ENCODE measurements at regions of chr15 and their contacts with region 1.

Region 1: GRCh38 chr15:69729161-69729748 is 276.6 kb downstream of the RPLP1 start:
- H3K4me3 Mint-ChIP-seq: no peak overlapping the region
- H3K27ac Mint-ChIP-seq: no peak overlapping the region
- H3K4me1 Mint-ChIP-seq: peaks cover 49% of the 10 kb centered on the region
- H3K27me3 Mint-ChIP-seq: peaks cover 3% of the 10 kb centered on the region

Region 2: GRCh38 chr15:69576035-69576526 is 153.2 kb before region 1 on chr15:
- intact Hi-C with region 1: loop called (anchors 5 kb)
- H3K4me3 Mint-ChIP-seq: no peak overlapping the region
- H3K27ac Mint-ChIP-seq: peak overlapping the region; percentile 63
- H3K4me1 Mint-ChIP-seq: peaks cover 52% of the 10 kb centered on the region
- H3K27me3 Mint-ChIP-seq: peaks cover 32% of the 10 kb centered on the region

Region 3: DNA sequence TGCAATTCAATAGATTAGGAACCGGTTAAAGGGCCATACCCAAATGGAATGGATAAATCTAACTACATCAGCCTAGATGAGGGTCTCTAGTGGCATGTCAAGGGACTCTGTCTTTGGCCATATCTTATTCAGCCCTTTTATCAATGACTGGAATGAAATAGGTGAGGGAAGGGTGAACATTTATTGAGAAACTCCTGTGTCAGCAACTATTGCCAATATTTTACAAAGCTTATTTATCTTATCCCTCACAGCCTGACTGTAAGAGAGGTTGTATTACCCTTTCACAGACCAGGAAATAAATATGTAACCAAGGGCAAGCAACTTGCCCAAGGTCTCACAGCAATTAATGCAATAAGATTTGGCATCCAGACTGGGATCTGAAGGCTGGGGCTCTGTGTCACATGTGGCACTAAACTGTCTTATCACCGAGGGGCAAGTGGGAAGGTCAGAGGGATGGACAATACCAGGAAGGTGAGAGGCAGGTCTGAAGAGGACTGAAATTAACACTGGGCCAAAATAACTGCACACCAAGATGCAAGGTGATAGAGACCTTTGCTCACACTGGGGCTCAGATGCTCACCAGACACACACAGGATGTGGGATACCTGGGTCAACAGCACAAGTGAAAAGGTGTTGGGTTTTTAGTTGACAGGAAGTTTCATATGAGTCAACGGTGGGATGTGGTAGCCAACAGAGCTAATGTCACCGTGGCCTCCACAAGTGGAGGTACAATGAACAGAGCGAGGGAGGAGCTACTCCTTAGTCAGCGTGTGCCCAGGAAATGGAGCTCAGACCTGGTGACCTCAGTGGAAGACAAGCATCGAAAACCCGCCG is 15.3 kb before region 1 on chr15:
- intact Hi-C with region 1: no loop called
- H3K4me3 Mint-ChIP-seq: no peak overlapping the region
- H3K27ac Mint-ChIP-seq: no peak overlapping the region
- H3K4me1 Mint-ChIP-seq: peaks cover 54% of the 10 kb centered on the region
- H3K27me3 Mint-ChIP-seq: peaks cover 14% of the 10 kb centered on the region

Measured in dendritic cell treated with granulocyte-macrophage colony-stimulating factor and Interleukin-4, amounts not matched to agents 40 ng/mL and 50 ng/mL, for 4 days (primary cell).